ENCODE measurements at regions of chr14 and their contacts with region 1.

Region 1: DNA sequence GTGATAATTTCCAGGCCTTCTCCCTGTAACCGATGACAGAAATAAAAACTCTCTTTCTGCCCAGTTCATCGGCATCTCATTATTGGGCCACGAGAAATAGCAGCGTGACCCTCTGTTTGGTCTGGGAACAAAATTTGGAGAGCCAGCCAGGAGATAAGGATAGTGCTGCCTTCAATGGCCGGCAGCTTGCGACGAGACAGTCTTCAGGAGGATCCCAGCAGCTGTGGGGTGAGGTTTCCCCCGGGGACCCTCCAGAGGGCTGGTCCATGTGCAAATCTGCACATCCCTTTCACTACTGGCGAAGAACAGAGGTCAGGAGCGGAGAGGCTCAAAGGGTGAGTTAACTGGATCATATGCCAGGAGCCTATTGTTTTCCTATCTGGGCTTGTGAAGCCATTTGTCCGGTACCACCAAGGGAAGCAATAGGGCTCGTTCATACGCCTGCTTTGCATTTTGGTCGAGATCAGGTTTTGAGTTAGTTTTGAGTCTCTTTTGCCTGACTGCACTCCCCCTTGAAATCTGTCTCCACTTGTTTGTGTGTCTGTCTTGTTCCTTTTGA is 4.8 kb downstream of the SLC39A2 start:
- DNase-seq: no peak
- H3K4me3 Mint-ChIP-seq: no peak overlapping the region
- H3K27ac Mint-ChIP-seq: no peak overlapping the region
- H3K4me1 Mint-ChIP-seq: peaks cover 4% of the 10 kb centered on the region
- H3K27me3 Mint-ChIP-seq: no peaks in the 10 kb centered on the region
- CTCF ChIP-seq: no peak

Region 2: DNA sequence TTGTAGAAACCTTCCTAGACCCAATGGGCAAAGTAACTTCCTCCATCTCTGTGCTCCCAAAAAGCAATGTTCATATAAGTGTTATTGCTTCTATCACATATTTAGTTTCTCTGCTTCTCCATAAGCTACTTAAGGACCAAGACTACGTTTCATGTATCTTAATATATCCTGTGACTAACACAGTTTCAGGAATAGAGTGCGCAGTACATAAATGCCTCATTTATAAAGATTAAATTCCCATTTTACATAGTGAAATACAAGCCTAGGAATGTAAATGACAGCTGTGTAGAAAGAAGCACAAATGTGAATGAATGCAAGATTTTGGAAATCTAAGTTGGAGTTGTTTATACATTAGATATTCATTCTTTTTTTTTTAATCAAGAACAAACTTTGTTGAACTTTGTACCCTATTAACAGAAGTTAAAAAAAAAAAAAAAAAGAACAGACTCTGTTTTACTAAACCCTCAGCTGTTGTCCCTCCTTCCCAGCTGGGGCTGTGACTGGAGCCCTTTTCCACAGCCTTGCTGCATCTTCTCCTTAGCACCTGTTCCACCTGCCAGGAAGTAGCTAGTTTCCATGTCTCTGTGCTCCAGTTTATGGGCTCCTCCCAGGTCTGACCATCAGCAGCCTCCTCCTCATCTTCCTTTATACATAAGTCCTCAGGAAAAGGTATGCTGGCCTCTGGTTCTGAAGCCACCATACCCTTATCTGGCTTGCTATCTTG is 21.1 kb before region 1 on chr14:
- CTCF ChIA-PET with region 1: interaction called, 10 read pairs
- POLR2A ChIA-PET with region 1: interaction called, 28 read pairs
- intact Hi-C with region 1: no loop called
- DNase-seq: no peak
- H3K4me3 Mint-ChIP-seq: no peak overlapping the region
- H3K27ac Mint-ChIP-seq: no peak overlapping the region
- H3K4me1 Mint-ChIP-seq: peaks cover 18% of the 10 kb centered on the region
- H3K27me3 Mint-ChIP-seq: no peaks in the 10 kb centered on the region
- CTCF ChIP-seq: no peak

Region 3: GRCh38 chr14:20989572-20990551 is 14.0 kb before region 1 on chr14 and contains the start of gene METTL17:
- CTCF ChIA-PET with region 1: interaction called, 12 read pairs
- POLR2A ChIA-PET with region 1: interaction called, 28 read pairs
- intact Hi-C with region 1: no loop called
- DNase-seq: peak; percentile 98
- H3K4me3 Mint-ChIP-seq: peak within 1 kb of the TSS; percentile 80
- H3K27ac Mint-ChIP-seq: peak within 1 kb of the TSS; percentile 91
- H3K4me1 Mint-ChIP-seq: peaks cover 24% of the 10 kb centered on the region
- H3K27me3 Mint-ChIP-seq: no peaks in the 10 kb centered on the region
- CTCF ChIP-seq: peak; percentile 7
- total RNA-seq, gene METTL17: 62.4 and 70.2 TPM in 2 replicates

Region 4: GRCh38 chr14:21032326-21033132 is 28.7 kb after region 1 on chr14:
- CTCF ChIA-PET with region 1: interaction called, 14 read pairs
- POLR2A ChIA-PET with region 1: interaction called, 3 read pairs
- intact Hi-C with region 1: no loop called
- DNase-seq: no peak
- H3K4me3 Mint-ChIP-seq: no peak overlapping the region
- H3K27ac Mint-ChIP-seq: no peak overlapping the region
- H3K4me1 Mint-ChIP-seq: no peaks in the 10 kb centered on the region
- H3K27me3 Mint-ChIP-seq: no peaks in the 10 kb centered on the region
- CTCF ChIP-seq: no peak

Measured in MCF 10A (cell line).